ENCODE measurements at regions of chr10 and their contacts with region 1.

Region 1: GRCh38 chr10:95246579-95247051 is 44.2 kb downstream of the PDLIM1 start:
- DNase-seq: no peak
- ATAC-seq: peak; percentile 81
- H3K4me3 ChIP-seq: no peak overlapping the region
- H3K27ac ChIP-seq: peak overlapping the region; percentile 78
- H3K4me1 ChIP-seq: peaks cover 47% of the 10 kb centered on the region
- H3K27me3 ChIP-seq: no peaks in the 10 kb centered on the region
- CTCF ChIP-seq: peak; percentile 77 to 85 (median 78)
- EP300 ChIP-seq: no peak
- POLR2A ChIP-seq: no peak
- RAD21 ChIP-seq: peak; percentile 77

Region 2: DNA sequence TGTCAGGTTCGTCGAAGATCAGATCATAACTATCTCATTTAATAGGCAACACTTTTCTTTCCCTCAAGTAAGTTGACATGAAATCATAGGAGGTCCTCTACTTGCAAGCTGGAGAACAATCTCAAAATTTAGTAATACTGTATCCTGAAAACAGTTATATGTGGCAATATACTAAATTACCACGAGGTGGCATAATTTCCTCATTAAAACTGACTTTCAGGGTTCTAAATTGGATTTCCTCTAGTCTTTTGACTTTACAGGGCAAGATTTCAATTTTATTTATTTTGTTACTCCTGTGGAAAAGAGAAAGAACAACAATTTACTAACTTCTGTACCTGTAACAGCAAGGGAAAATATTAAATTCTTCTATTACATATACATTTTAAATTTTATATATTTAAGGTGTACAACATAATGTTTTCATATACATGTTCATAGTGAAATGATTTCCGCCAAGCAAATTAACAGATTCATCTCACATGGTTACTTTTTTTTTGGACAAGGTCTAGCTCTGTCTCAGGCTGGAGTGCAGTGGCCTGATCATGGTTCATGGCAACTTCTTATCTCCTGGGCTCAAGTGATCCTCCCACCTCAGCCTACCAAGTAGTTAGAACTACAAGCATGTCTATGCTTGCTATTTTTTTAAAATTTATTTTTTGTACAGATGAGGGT is 616.5 kb before region 1 on chr10:
- CTCF ChIA-PET with region 1: interaction called, 4 read pairs
- POLR2A ChIA-PET with region 1: no interaction called
- RAD21 ChIA-PET with region 1: interaction called, 3 read pairs
- SMC1A ChIA-PET with region 1: no interaction called
- in situ Hi-C with region 1: no loop called
- intact Hi-C with region 1: loop called (anchors 10 kb)
- DNase-seq: no peak
- ATAC-seq: peak; percentile 70
- H3K4me3 ChIP-seq: no peak overlapping the region
- H3K27ac ChIP-seq: no peak overlapping the region
- H3K4me1 ChIP-seq: no peaks in the 10 kb centered on the region
- H3K27me3 ChIP-seq: no peaks in the 10 kb centered on the region
- CTCF ChIP-seq: peak; percentile 27 to 61 (median 45); a peak in 4 of 6 replicates
- EP300 ChIP-seq: no peak
- POLR2A ChIP-seq: no peak
- RAD21 ChIP-seq: peak; percentile 64

Region 3: GRCh38 chr10:94785211-94785610 is 461.4 kb before region 1 on chr10:
- CTCF ChIA-PET with region 1: no interaction called
- POLR2A ChIA-PET with region 1: no interaction called
- RAD21 ChIA-PET with region 1: no interaction called
- SMC1A ChIA-PET with region 1: no interaction called
- in situ Hi-C with region 1: no loop called
- intact Hi-C with region 1: no loop called
- DNase-seq: no peak
- ATAC-seq: no peak
- H3K4me3 ChIP-seq: no peak overlapping the region
- H3K27ac ChIP-seq: no peak overlapping the region
- H3K4me1 ChIP-seq: no peaks in the 10 kb centered on the region
- H3K27me3 ChIP-seq: no peaks in the 10 kb centered on the region
- CTCF ChIP-seq: no peak
- EP300 ChIP-seq: no peak
- POLR2A ChIP-seq: no peak
- RAD21 ChIP-seq: no peak

Region 4: DNA sequence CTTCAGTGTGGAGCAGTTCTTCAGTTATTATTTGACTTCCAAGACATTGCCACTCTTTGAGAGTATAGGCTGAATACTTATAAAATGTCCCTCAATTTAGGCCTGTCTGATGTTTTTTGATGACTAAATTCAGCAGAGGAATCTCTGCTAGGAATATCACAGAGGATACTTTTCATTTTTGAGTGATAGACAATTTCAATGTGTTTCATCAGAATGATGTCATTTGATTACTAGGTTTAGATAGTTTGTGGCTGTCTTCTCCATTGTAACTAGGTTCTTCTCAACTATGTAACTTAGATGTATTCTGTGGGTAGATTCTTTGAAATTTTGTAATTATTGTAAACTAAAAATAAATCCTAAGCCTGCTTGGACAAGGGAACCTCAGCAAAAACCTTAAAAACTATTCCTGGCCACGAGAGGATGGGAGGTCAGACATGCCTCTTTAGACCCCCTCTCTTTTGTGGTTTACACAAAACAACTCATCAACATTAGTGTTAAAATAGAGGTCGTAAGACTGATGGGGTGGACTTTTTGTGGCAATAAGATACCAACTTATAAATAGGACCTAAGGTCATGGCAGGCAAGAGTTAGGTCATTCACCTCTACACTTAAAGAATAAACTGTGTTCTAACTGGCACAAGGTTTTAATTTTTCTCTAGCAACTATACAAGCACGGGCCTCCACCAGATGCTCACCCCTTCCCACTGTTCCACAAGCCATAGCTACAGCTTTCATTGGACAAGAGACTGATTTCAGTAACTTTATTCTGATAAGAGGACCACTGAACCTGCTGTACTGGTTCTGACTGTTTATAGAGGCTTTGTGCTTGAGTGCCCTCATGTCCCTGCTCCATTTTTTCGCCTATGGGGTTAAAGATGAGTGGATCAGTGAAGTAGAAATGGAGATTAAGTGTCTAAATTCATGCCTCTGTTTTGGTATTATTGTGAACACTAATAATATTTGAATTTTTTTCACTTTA is 211.0 kb before region 1 on chr10:
- CTCF ChIA-PET with region 1: no interaction called
- POLR2A ChIA-PET with region 1: no interaction called
- RAD21 ChIA-PET with region 1: no interaction called
- SMC1A ChIA-PET with region 1: no interaction called
- in situ Hi-C with region 1: no loop called
- intact Hi-C with region 1: no loop called
- DNase-seq: no peak
- ATAC-seq: no peak
- H3K4me3 ChIP-seq: no peak overlapping the region
- H3K27ac ChIP-seq: no peak overlapping the region
- H3K4me1 ChIP-seq: no peaks in the 10 kb centered on the region
- H3K27me3 ChIP-seq: peaks cover 0 to 2% of the 10 kb centered on the region in 2 experiments; a peak in 2 of 4 replicates
- CTCF ChIP-seq: no peak
- EP300 ChIP-seq: no peak
- POLR2A ChIP-seq: no peak
- RAD21 ChIP-seq: no peak

Region 5: DNA sequence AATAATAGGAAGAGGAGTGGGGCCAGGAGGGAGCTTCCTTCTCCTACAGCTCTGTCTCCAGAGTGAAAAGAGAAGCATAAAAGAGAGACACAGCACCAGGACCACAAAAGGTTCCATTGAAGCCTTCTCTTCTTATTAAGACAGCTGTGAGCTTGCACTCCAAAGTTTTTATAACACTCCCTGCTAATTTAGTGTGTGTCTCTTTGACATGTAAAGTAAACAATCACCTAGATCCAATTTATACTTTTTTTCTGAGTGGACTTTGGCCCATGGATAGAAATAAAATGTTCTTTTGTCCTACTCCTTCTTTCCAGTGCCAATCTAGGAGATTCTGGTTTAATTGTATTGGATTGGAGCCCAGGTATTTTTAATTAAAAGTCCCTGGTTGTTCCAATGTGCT is 177.3 kb before region 1 on chr10 and contains the start of gene CYP2C8:
- CTCF ChIA-PET with region 1: no interaction called
- POLR2A ChIA-PET with region 1: no interaction called
- RAD21 ChIA-PET with region 1: no interaction called
- SMC1A ChIA-PET with region 1: no interaction called
- in situ Hi-C with region 1: no loop called
- intact Hi-C with region 1: no loop called
- DNase-seq: no peak
- ATAC-seq: no peak
- H3K4me3 ChIP-seq: no peak within 1 kb of the TSS
- H3K27ac ChIP-seq: no peak within 1 kb of the TSS
- H3K4me1 ChIP-seq: no peaks in the 10 kb centered on the region
- H3K27me3 ChIP-seq: no peaks in the 10 kb centered on the region
- CTCF ChIP-seq: no peak
- EP300 ChIP-seq: no peak
- POLR2A ChIP-seq: no peak
- RAD21 ChIP-seq: no peak
- polyA plus RNA-seq, gene CYP2C8: 0.10 to 0.13 TPM

Region 6: DNA sequence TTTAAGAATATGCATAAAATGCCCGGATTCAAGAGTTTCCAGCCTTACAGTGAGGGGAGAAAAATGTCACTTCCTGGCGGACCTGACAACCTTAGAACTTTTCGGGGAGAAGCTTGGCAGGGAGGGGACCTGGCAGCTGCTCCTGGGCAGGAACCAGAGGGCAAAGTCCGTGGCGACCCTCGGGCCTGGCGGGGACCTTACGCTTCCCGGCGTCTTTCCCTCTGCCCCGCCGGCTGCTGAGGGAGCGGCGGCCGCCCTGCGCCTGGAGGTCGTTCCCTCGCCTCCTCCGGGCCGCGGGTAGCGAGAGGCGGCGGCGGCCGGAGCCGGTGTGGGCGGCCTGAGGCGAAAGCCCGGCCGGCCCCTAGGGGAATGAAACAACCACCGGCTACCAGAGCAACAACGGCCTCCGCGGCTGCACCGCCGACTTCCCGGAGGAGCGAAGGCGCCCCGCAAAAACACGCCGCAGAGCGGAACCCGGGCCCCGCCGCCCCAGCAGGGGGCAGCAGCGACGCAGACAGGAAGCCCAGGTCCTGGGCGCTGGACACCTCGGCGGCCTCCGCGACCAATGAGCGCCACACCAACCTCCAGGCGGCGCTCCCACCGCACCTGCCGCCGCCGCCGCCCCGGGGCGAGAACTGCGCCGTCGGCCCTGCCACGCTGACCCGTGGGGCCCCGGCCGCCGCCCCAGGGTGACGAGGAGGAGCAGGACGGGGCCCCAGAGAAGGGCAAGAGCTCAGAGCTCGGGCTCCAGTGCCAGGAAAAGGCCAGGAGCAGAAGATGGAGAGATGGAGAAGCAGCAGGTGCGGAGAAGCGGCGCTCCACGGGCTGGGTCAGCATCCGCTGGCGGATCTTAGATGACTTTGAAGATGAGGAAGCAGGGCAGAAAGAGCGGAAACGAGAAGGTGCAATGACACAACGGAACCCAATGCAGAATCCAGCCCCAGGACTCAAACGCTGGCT is 63.1 kb before region 1 on chr10:
- CTCF ChIA-PET with region 1: interaction called, 14 read pairs
- POLR2A ChIA-PET with region 1: no interaction called
- RAD21 ChIA-PET with region 1: interaction called, 4 read pairs
- SMC1A ChIA-PET with region 1: interaction called, 4 read pairs
- in situ Hi-C with region 1: no loop called
- intact Hi-C with region 1: loop called (anchors 1 kb)
- DNase-seq: peak; percentile 27
- ATAC-seq: peak; percentile 99
- H3K4me3 ChIP-seq: peak overlapping the region; percentile 69
- H3K27ac ChIP-seq: no peak overlapping the region
- H3K4me1 ChIP-seq: no peaks in the 10 kb centered on the region
- H3K27me3 ChIP-seq: no peaks in the 10 kb centered on the region
- CTCF ChIP-seq: peak; percentile 84 to 98 (median 92)
- EP300 ChIP-seq: 0 out of 4 replicates have a peak, but pooled peaks of 1 of the 2 experiments have one; percentile 17
- POLR2A ChIP-seq: peak; percentile 69
- RAD21 ChIP-seq: peak; percentile 67

Region 7: GRCh38 chr10:95260397-95260881 is 13.8 kb after region 1 on chr10:
- CTCF ChIA-PET with region 1: interaction called, 24 read pairs
- POLR2A ChIA-PET with region 1: interaction called, 3 read pairs
- RAD21 ChIA-PET with region 1: interaction called, 6 read pairs
- SMC1A ChIA-PET with region 1: interaction called, 19 read pairs
- in situ Hi-C with region 1: no loop called
- intact Hi-C with region 1: no loop called
- DNase-seq: no peak
- ATAC-seq: peak; percentile 48
- H3K4me3 ChIP-seq: no peak overlapping the region
- H3K27ac ChIP-seq: no peak overlapping the region
- H3K4me1 ChIP-seq: no peaks in the 10 kb centered on the region
- H3K27me3 ChIP-seq: no peaks in the 10 kb centered on the region
- CTCF ChIP-seq: no peak
- EP300 ChIP-seq: no peak
- POLR2A ChIP-seq: no peak
- RAD21 ChIP-seq: no peak

Region 8: DNA sequence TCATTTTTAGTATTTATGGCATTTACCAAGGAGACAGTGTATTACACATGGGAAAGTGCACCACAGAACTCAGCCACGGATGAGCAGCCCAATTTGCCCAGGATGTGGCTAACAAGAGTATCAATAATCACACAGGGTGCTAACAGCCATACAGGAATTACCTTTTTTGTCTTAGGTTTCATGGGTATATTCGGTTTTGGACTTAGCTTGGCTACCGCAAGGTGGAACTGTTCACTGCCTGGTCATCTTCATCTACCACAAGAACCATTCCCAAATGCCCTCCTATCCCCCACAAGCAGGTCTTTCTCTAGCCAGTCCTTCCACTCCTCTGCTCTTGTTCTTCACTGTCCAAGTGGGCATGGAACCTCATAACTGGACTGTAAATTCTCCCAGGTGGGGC is 38.2 kb after region 1 on chr10:
- CTCF ChIA-PET with region 1: interaction called, 176 read pairs
- POLR2A ChIA-PET with region 1: interaction called, 4 read pairs
- RAD21 ChIA-PET with region 1: interaction called, 38 read pairs
- SMC1A ChIA-PET with region 1: interaction called, 50 read pairs
- in situ Hi-C with region 1: no loop called
- intact Hi-C with region 1: no loop called
- DNase-seq: no peak
- ATAC-seq: peak; percentile 53
- H3K4me3 ChIP-seq: peak overlapping the region; percentile 59
- H3K27ac ChIP-seq: peak overlapping the region; percentile 50
- H3K4me1 ChIP-seq: peaks cover 22% of the 10 kb centered on the region
- H3K27me3 ChIP-seq: no peaks in the 10 kb centered on the region
- CTCF ChIP-seq: peak; percentile 24 to 56 (median 55); a peak in 5 of 6 replicates
- EP300 ChIP-seq: no peak
- POLR2A ChIP-seq: no peak
- RAD21 ChIP-seq: peak; percentile 36; the same call in 1 of the 2 replicates